ENCODE measurements at regions of chr2 and their contacts with region 1.

Region 1: DNA sequence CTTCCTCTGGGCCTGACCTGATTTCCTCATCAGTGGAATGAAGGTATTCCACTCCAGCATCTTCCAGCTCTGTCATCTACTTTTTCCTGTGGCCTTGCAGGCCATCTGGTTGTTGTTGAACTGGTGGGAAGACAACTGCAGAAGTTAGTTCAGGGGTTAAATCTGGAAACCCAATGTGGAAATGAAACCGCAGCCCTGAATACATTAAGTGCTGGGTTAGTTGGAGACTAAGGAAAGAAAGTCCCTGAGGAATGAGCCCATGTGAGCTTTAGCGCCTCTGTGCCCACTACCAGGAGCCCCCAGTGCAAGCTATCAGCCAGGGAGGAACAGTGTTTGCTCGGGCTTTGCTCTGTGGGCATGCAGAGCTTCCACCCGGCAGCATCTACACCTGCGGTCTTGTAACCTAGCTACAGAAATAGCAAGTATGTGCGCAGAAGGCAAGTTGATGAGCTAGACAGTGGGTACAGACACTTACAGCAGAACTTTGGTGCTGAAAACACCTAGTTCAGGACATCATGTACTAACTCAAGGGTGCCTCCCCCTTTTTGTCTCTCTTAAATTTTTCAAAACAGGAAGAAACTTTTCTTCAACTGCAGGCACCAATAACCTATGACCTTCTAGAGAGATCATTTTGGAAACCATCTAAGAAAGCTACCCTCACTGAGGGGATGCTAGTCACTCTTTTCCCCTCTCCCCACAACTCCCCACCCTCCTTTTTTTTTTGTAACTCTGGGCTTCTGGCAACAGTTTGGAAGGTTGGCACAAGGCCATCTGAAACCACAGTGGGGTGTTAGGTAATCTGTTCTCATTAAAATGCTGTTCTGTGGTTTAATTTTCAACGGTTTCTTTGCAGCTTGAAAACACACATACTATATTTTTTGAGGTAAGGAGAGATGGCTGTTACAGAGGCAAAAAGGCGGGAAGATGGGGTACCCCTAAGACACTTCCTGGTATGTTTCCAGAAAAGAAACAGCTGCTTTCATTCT is 18.3 kb upstream of the CXCR4 start:
- DNase-seq: peak; percentile 71 to 97 (median 78)
- ATAC-seq: peak; percentile 61
- H3K4me3 ChIP-seq: peak overlapping the region; percentile 27
- H3K4me3 Mint-ChIP-seq: peak overlapping the region; percentile 51
- H3K27ac ChIP-seq: peak overlapping the region; percentile 94 to 99
- H3K27ac Mint-ChIP-seq: peak overlapping the region; percentile 97
- H3K4me1 ChIP-seq: peaks cover 94% of the 10 kb centered on the region
- H3K4me1 Mint-ChIP-seq: peaks cover 96% of the 10 kb centered on the region
- H3K27me3 ChIP-seq: no peaks in the 10 kb centered on the region
- H3K27me3 Mint-ChIP-seq: no peaks in the 10 kb centered on the region
- CTCF ChIP-seq: no peak

Region 2: DNA sequence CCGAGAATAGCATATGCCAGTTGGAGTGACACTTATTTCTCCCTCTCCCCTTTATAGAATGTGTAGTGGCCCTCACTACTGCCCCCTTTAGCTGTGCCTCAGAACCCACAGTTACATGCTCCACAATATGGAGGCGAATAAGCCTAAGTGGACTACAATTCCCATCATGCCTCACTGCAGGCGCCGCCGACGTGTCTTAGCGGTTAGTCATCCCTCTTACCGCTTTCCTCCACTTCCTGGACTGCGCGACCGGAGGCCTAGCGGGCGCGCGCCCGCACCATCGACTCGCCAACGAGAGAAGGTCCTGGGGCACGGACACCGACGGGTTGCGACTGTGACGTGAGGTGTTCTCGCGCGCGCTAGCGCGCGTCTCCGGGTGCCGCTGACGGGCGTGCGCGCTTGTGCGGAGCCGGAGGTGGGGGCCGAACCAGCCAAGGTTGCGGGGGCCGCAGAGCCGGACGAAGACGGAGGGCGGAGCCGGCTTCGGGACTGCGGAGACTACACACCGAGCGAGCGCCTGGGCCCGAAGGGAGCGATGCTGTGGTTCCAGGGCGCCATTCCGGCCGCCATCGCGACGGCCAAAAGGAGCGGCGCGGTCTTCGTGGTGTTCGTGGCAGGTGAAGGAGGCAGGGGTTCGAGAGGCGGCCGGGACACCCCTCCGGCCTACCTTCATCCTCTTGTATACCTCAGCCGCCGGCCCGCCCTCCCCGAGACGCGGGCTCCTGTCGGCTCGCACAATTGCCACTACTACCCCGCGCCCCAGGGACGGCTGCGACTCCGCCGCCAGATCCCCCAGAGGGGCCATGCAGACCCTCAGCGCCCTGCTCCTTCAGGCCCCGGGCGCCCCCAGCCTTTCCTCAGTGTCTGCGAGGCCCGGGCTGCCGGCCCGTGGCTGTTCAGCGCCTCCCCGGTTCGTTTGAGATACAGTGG is 394.6 kb before region 1 on chr2 and contains the start of gene UBXN4:
- CTCF ChIA-PET with region 1: no interaction called
- POLR2A ChIA-PET with region 1: no interaction called
- intact Hi-C with region 1: loop called in 1 of 2 experiments (anchors 10 kb)
- DNase-seq: peak; percentile 86 to 99 (median 93)
- ATAC-seq: peak; percentile 87
- H3K4me3 ChIP-seq: peak within 1 kb of the TSS; percentile 94
- H3K4me3 Mint-ChIP-seq: peak within 1 kb of the TSS; percentile 95
- H3K27ac ChIP-seq: peak within 1 kb of the TSS; percentile 95 to 98
- H3K27ac Mint-ChIP-seq: peak within 1 kb of the TSS; percentile 92
- H3K4me1 ChIP-seq: peaks cover 11% of the 10 kb centered on the region
- H3K4me1 Mint-ChIP-seq: peaks cover 46% of the 10 kb centered on the region
- H3K27me3 ChIP-seq: no peaks in the 10 kb centered on the region
- H3K27me3 Mint-ChIP-seq: no peaks in the 10 kb centered on the region
- CTCF ChIP-seq: peak; percentile 17
- total RNA-seq, gene UBXN4: 143 to 150 TPM

Region 3: GRCh38 chr2:135820003-135820618 is 316.1 kb before region 1 on chr2:
- CTCF ChIA-PET with region 1: no interaction called
- POLR2A ChIA-PET with region 1: no interaction called
- intact Hi-C with region 1: no loop called
- DNase-seq: peak in 13 of 14 experiments; percentile 5 to 65 (median 34)
- ATAC-seq: peak; percentile 92
- H3K4me3 ChIP-seq: peak overlapping the region; percentile 16
- H3K4me3 Mint-ChIP-seq: peak overlapping the region; percentile 56
- H3K27ac ChIP-seq: no peak overlapping the region
- H3K27ac Mint-ChIP-seq: peak overlapping the region; percentile 45
- H3K4me1 ChIP-seq: peaks cover 20% of the 10 kb centered on the region
- H3K4me1 Mint-ChIP-seq: peaks cover 16% of the 10 kb centered on the region
- H3K27me3 ChIP-seq: no peaks in the 10 kb centered on the region
- H3K27me3 Mint-ChIP-seq: no peaks in the 10 kb centered on the region
- CTCF ChIP-seq: no peak

Region 4: DNA sequence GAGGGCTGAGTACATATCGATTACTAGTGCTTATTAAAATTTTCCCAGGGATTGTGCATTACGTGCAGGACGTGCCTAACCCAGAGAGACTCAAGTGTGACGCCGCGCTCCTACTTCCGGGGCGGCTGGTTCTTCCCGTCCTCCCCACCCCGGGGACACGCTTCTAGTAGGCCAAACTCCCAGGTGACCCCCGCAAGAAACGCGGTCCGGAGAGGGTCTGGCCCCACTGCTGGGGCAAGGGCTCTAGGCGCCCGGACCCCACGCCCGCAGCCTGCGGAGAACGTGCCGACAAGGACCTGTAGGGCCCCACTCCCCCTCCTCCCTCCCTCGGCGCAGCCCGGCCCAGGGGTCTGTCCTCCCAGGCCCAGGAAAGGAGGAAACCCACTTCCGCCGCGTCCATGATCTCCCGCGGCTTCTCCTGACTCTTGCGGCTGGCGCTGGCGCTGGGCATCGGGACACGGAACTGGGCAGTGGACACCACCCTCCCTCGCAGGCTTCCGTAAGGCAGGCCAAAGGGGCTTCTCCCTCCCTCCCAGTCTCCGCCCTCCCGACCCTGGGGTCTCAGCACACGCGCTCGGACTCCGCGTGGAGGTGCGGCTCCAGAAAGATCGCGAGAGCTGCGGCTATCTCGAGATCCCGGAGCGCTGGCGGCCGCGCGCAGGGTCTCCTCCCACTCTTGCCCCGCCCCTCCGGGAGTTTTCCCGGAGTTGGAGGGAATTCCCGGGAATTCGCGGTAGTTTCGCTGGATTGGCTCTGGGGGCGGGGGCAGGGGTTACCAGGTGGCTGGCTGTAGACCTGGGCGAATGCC is 151.0 kb before region 1 on chr2 and contains the start of gene DARS1:
- CTCF ChIA-PET with region 1: no interaction called
- POLR2A ChIA-PET with region 1: interaction called, 15 read pairs
- intact Hi-C with region 1: no loop called
- DNase-seq: peak; percentile 59 to 91 (median 68)
- ATAC-seq: peak; percentile 82
- H3K4me3 ChIP-seq: peak within 1 kb of the TSS; percentile 84
- H3K4me3 Mint-ChIP-seq: peak within 1 kb of the TSS; percentile 99
- H3K27ac ChIP-seq: peak within 1 kb of the TSS; percentile 95 to 98
- H3K27ac Mint-ChIP-seq: peak within 1 kb of the TSS; percentile 99
- H3K4me1 ChIP-seq: peaks cover 7% of the 10 kb centered on the region
- H3K4me1 Mint-ChIP-seq: peaks cover 50% of the 10 kb centered on the region
- H3K27me3 ChIP-seq: no peaks in the 10 kb centered on the region
- H3K27me3 Mint-ChIP-seq: no peaks in the 10 kb centered on the region
- CTCF ChIP-seq: no peak
- total RNA-seq, gene DARS1: 38.2 to 41.7 TPM

Region 5: DNA sequence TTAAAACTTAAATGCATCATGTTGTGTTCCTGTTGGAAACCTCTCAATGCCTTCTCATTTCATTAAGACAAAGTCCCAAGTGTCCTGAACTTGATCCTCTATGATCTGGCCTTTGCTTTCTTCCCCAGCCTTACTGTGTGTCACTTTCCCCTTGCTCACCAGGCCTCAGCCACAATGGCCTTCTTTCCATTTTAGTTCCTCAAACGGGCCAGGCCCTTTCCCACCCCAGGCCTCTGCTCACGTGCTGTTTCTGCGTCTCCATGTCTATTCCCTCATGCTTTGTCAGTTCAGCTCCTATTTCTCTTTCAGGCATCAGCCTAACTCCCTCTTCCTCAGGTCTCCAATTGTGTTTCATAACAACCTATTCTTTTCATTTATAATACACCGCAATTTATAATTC is 37.8 kb before region 1 on chr2:
- CTCF ChIA-PET with region 1: no interaction called
- POLR2A ChIA-PET with region 1: no interaction called
- intact Hi-C with region 1: no loop called
- DNase-seq: no peak
- ATAC-seq: no peak
- H3K4me3 ChIP-seq: no peak overlapping the region
- H3K4me3 Mint-ChIP-seq: no peak overlapping the region
- H3K27ac ChIP-seq: no peak overlapping the region
- H3K27ac Mint-ChIP-seq: no peak overlapping the region
- H3K4me1 ChIP-seq: no peaks in the 10 kb centered on the region
- H3K4me1 Mint-ChIP-seq: no peaks in the 10 kb centered on the region
- H3K27me3 ChIP-seq: no peaks in the 10 kb centered on the region
- H3K27me3 Mint-ChIP-seq: no peaks in the 10 kb centered on the region
- CTCF ChIP-seq: no peak

Region 6: GRCh38 chr2:136238286-136239078 is 102.3 kb after region 1 on chr2:
- CTCF ChIA-PET with region 1: interaction called, 24 read pairs
- POLR2A ChIA-PET with region 1: interaction called, 56 read pairs
- intact Hi-C with region 1: loop called (anchors 2 to 5 kb)
- DNase-seq: peak; percentile 31 to 87 (median 46)
- ATAC-seq: peak; percentile 80
- H3K4me3 ChIP-seq: no peak overlapping the region
- H3K4me3 Mint-ChIP-seq: peak overlapping the region; percentile 2
- H3K27ac ChIP-seq: peak overlapping the region; percentile 68 to 75
- H3K27ac Mint-ChIP-seq: peak overlapping the region; percentile 83
- H3K4me1 ChIP-seq: peaks cover 49% of the 10 kb centered on the region
- H3K4me1 Mint-ChIP-seq: peaks cover 58% of the 10 kb centered on the region
- H3K27me3 ChIP-seq: no peaks in the 10 kb centered on the region
- H3K27me3 Mint-ChIP-seq: no peaks in the 10 kb centered on the region
- CTCF ChIP-seq: no peak

Region 7: DNA sequence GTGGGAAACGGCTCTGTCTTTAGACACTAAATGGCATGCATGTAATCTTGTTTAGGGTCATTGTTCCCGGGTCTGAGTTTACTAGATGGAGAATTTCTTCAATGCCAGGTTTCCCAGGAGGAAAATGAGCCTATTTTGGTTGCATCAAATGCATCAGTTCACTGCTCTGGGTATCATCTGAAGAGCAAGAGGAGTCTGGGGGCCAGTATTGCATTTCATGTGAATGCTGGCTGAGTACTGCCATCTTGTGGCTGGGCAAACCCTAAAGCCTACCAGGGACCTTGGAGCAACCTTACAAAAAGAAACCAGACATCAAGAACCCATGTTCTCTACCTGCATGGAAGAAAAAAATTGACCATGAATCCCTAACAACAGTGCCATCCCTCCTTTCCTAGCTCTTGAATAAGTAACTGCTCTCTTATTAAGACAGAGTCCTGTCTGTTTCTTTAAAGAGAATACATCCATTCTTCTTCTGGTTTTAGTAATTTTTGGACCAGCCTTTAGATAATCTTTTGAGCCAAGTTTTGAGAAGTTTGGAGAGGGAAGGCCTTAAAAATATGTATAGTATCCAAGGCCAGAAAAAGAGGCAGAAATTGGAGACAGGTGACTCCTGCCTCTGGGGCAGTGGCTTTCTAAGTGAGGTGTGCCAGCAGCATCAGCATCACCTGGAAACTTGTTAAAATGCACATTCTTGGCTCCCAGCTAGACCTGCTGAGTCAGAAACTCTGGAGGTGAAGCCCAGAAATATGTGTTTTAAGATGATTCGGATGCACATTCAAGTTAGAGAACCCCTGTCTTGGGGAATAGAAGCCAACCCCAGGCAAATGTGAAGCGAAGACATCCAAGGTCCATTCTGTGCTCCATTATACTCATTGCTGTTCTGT is 242.7 kb after region 1 on chr2:
- CTCF ChIA-PET with region 1: interaction called, 15 read pairs
- POLR2A ChIA-PET with region 1: interaction called, 15 read pairs
- intact Hi-C with region 1: loop called in 1 of 2 experiments (anchors 1 kb)
- DNase-seq: peak; percentile 63 to 88 (median 76)
- ATAC-seq: peak; percentile 35
- H3K4me3 ChIP-seq: no peak overlapping the region
- H3K4me3 Mint-ChIP-seq: peak overlapping the region; percentile 31
- H3K27ac ChIP-seq: no peak overlapping the region
- H3K27ac Mint-ChIP-seq: peak overlapping the region; percentile 80
- H3K4me1 ChIP-seq: peaks cover 43% of the 10 kb centered on the region
- H3K4me1 Mint-ChIP-seq: peaks cover 72% of the 10 kb centered on the region
- H3K27me3 ChIP-seq: no peaks in the 10 kb centered on the region
- H3K27me3 Mint-ChIP-seq: no peaks in the 10 kb centered on the region
- CTCF ChIP-seq: peak; percentile 78

Measured in CD4-positive, alpha-beta T cell (primary cell).